GM12878 (cell line): ENCODE measurements at regions of chr3 and their contacts with region 1.

Region 1: DNA sequence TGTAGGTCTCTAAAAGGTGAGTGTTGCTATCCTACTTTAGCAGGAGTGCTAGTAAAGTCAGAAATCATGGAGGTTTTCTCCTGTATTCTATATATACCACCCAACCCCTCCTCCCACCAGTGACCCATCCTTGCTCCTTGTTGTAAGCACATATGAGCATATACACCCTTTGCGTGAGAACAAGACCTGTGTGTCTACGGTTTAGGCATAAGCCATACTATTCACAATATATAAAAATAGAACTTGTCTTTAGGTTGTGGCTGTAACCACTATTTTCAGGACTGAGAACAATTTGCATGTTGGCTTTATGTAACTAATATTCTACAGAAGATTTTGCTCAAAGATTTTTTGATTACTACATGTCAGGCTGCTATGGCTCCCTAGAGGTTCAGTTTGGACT is 59.1 kb upstream of the TOP2B start:
- DNase-seq: no peak
- ATAC-seq: peak; percentile 78
- H3K4me3 ChIP-seq: no peak overlapping the region
- H3K27ac ChIP-seq: no peak overlapping the region
- H3K4me1 ChIP-seq: peaks cover 9% of the 10 kb centered on the region
- H3K27me3 ChIP-seq: no peaks in the 10 kb centered on the region
- CTCF ChIP-seq: no peak
- EP300 ChIP-seq: peak in 1 of 2 experiments; percentile 25; a peak in 1 of 4 replicates
- POLR2A ChIP-seq: no peak
- RAD21 ChIP-seq: no peak

Region 2: DNA sequence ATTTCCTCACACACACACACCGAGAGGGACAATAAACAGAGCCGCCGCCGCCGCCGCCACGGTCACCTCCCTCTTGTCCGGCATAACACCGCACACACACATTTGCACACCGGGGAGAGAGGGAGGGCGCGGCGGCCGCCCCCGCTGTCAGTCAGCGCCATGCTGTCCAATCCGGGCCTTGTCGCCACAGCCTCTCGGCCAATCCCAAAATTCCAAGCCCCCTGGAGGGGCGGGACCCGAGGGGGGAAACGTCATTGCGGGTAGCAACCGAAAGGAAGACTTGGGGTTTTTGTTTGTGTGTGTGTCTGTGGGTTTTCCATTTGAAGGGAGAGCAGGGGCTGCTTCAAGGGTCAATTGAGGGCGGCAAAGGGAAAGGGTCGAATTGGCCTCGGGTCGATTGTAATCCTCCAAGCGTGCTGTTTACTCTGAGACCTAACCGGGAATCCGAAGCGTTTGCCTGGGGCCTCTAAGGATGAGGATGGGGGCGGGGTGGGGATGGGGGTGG is 58.9 kb before region 1 on chr3 and contains the start of gene TOP2B:
- CTCF ChIA-PET with region 1: interaction called, 3 read pairs
- POLR2A ChIA-PET with region 1: no interaction called
- RAD21 ChIA-PET with region 1: no interaction called
- SMC1A ChIA-PET with region 1: interaction called, 7 read pairs
- in situ Hi-C with region 1: no loop called
- intact Hi-C with region 1: loop called (anchors 5 kb)
- DNase-seq: peak; percentile 81
- ATAC-seq: peak; percentile 90
- H3K4me3 ChIP-seq: peak within 1 kb of the TSS; percentile 72
- H3K27ac ChIP-seq: peak within 1 kb of the TSS; percentile 92
- H3K4me1 ChIP-seq: peaks cover 11% of the 10 kb centered on the region
- H3K27me3 ChIP-seq: no peaks in the 10 kb centered on the region
- CTCF ChIP-seq: no peak
- EP300 ChIP-seq: no peak; a peak in 3 of 4 replicates
- POLR2A ChIP-seq: peak; percentile 85
- RAD21 ChIP-seq: no peak
- polyA plus RNA-seq, gene TOP2B: 34.2 to 57.5 TPM